Psoas muscle (tissue), 8 donors: ENCODE measurements at regions of chr14 and their contacts with region 1.

Region 1: DNA sequence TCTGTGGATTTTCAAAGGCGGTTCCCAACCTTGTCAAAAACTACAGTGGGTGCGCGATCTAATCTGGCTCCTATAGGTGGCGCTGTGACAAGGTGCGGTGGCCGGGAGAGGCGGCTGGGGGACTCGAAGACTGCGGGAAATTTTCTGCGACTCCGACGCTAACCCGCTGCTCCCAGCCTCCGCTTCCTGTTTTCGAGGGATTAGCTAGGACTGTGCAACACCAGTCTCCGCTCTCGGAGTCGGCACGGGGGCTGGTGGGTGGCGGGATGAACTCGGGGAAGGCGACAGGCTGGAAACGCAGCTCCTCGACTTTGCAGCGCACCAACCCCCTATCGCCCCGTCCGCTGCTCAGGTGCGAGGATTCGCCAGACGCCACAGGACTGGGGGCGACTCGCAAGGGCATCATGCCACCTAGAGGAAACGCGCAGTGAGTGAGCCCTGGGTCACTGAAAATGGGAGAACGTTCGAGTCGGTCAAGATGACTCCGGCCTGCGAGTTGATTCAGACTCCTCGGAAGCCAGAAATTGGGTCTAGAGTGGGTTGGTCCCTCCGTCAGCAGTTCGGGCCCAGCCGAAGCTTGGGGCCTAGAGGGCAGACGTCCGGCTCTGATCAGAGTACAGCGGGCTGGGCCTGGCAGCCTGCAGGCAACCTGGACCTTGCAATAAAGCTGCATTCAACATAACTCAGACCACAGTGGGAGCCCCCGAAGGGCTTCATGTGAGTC is 5.5 kb upstream of the PAX9 start:
- DNase-seq: no peak
- ATAC-seq: peak in 3 of 4 donors; percentile 23 to 47 (median 46)
- H3K4me3 ChIP-seq: peak overlapping the region; percentile 60
- H3K27ac ChIP-seq: no peak overlapping the region
- H3K4me1 ChIP-seq: no peaks in the 10 kb centered on the region
- H3K27me3 ChIP-seq: peaks cover 5 to 100% (median 53%) of the 10 kb centered on the region in 3 donors
- CTCF ChIP-seq: peak; percentile 40

Region 2: DNA sequence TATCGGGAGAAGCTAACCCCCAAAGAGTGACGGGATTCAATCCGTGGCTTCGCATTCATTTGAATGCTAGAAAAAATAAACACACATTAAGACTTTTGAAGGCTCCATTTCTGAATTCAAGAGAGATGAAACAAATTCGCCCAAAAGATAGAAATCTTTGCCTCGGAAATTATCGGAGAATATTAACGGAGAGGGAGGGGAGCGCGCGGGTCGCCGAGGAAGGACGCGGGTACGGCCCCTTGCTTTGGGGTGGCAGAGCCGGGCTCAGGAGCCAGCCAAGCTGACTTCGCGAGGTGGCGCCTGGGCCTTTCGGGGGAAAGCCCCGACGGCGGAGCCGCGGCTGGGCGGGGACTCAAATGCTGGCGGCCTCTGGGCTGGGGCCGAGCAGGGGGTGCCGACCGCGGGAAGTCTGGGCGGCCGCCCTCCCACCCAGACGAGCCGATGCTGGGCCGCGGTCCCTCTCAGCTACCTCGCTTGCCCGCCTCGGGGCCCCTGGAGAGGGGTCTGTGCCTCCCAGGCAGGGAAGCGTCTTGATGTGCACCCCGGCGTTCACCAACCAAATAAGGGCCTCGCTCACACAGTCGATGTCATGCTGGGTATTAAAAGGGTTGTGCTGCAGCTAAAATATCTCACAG is 150.8 kb before region 1 on chr14:
- intact Hi-C with region 1: loop called in 1 of 2 experiments (anchors 10 kb)
- DNase-seq: no peak
- ATAC-seq: no peak
- H3K4me3 ChIP-seq: no peak overlapping the region
- H3K27ac ChIP-seq: no peak overlapping the region
- H3K4me1 ChIP-seq: peaks cover 5% of the 10 kb centered on the region
- H3K27me3 ChIP-seq: peaks cover 14 to 100% (median 50%) of the 10 kb centered on the region in 3 donors
- CTCF ChIP-seq: no peak